ENCODE measurements at regions of chr3 and their contacts with region 1.

Region 1: GRCh38 chr3:71244153-71244825 is 339.2 kb downstream of the FOXP1 start:
- DNase-seq: no peak
- ATAC-seq: no peak
- H3K4me3 Mint-ChIP-seq: no peak overlapping the region
- H3K27ac Mint-ChIP-seq: no peak overlapping the region
- H3K4me1 Mint-ChIP-seq: peaks cover 65% of the 10 kb centered on the region
- H3K27me3 Mint-ChIP-seq: no peaks in the 10 kb centered on the region

Region 2: DNA sequence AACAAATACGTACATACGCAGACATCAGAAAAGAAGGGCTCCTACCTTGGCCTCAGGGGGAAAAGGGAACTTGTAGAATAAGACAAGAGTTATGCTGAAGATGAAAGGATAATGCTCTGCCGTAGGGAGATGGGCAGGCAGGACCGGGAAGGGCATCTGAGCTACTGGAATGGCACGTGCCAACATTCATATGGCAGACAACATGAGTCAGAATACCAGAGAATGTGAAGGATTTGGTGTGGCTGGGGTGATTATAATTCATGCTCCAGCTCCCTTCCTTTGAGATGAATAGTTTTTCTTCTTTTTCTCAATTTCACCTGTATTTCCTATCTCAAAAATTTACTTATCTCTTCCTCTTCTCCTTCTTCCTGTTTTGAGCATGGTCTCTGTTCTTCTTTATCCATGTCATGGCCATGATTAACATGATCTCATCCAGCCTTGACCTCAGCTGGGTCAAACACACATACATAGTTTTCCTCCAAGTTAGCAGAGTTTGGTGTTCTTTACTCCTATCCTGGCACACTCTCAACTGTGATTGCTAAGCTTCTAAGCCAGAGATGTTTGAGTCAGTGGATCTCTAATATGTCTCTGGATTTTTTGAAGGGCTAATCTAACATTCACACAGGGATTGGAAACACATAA is 167.8 kb before region 1 on chr3:
- CTCF ChIA-PET with region 1: no interaction called
- POLR2A ChIA-PET with region 1: no interaction called
- intact Hi-C with region 1: no loop called
- DNase-seq: no peak
- ATAC-seq: no peak
- H3K4me3 Mint-ChIP-seq: no peak overlapping the region
- H3K27ac Mint-ChIP-seq: peak overlapping the region; percentile 87
- H3K4me1 Mint-ChIP-seq: peaks cover 96% of the 10 kb centered on the region
- H3K27me3 Mint-ChIP-seq: no peaks in the 10 kb centered on the region

Region 3: DNA sequence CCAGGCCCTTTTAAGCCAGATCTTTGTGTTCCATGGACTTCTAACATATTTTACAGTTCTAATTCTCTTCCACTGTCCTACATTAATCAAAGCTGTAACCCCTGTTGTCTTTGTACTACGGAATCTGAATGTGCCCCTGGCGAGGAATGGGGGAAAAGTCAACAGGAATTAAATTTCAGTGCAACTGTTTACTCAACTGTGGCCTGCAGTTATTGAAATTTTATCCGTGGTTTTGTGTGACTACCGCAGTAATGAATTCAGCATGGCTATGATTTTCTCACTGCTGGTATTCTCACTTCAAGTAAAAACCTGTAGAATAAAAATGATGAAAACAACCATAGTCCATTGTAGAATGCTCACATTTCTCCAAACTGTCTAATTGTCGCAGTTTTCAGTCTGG is 48.8 kb before region 1 on chr3:
- CTCF ChIA-PET with region 1: no interaction called
- POLR2A ChIA-PET with region 1: no interaction called
- intact Hi-C with region 1: no loop called
- DNase-seq: no peak
- ATAC-seq: no peak
- H3K4me3 Mint-ChIP-seq: no peak overlapping the region
- H3K27ac Mint-ChIP-seq: peak overlapping the region; percentile 56
- H3K4me1 Mint-ChIP-seq: peaks cover 69% of the 10 kb centered on the region
- H3K27me3 Mint-ChIP-seq: no peaks in the 10 kb centered on the region

Region 4: DNA sequence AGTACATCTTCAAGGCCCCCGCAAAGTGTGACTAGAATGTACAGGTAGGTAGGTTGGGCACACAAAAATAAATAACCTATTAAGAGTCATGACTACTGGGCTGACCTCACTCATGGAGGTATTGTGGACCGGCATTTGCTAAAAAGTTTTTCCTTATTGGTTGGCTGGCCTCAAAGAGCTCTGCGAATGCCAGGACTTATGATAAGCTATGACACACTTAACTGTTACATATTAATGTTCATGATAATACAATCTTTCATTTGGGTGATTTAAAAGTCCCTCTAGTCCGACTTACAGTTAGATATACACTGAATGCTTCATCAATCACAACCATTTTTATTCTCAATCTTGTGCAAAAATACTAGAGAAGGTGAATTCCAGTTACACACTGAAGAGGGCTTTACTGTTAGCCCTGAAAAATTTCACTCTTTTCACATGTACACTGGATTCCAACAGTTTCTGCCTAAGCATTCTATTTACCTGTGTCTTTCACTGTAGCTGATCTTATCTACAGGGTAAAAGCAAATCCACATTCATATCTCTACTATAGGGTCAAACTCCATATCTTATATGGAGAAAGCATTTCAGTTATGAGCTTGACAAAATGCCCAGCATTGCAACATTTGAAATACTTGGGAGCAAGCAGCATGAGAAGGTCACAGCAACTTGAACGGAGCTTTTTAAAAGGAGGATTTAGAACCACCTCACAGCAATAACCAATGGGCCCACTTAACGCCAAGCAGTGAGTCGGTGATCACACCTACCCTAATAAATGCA is 10.2 kb after region 1 on chr3:
- CTCF ChIA-PET with region 1: interaction called, 10 read pairs
- POLR2A ChIA-PET with region 1: no interaction called
- intact Hi-C with region 1: no loop called
- DNase-seq: no peak
- ATAC-seq: no peak
- H3K4me3 Mint-ChIP-seq: no peak overlapping the region
- H3K27ac Mint-ChIP-seq: peak overlapping the region; percentile 1
- H3K4me1 Mint-ChIP-seq: peaks cover 80% of the 10 kb centered on the region
- H3K27me3 Mint-ChIP-seq: no peaks in the 10 kb centered on the region

Measured in activated CD4-positive, alpha-beta T cell treated with anti-CD3 and anti-CD28 coated beads for 36 hours (primary cell).